Stomach (tissue), 19 donors: ENCODE measurements at regions of chr1 and their contacts with region 1.

Region 1: GRCh38 chr1:85307987-85308832 is 31.8 kb upstream of the BCL10 start:
- DNase-seq: peak; percentile 90 to 96
- H3K4me3 ChIP-seq: no peak overlapping the region
- H3K27ac ChIP-seq: peak overlapping the region in 1 of 5 donors; percentile 39
- H3K4me1 ChIP-seq: peaks cover 0 to 14% (median 12%) of the 10 kb centered on the region in 4 donors
- H3K27me3 ChIP-seq: peaks cover 0 to 7% (median 0%) of the 10 kb centered on the region in 3 donors
- CTCF ChIP-seq: peak in 5 of 7 experiments; percentile 88 to 98 (median 94)
- EP300 ChIP-seq: no peak
- POLR2A ChIP-seq: no peak

Region 2: DNA sequence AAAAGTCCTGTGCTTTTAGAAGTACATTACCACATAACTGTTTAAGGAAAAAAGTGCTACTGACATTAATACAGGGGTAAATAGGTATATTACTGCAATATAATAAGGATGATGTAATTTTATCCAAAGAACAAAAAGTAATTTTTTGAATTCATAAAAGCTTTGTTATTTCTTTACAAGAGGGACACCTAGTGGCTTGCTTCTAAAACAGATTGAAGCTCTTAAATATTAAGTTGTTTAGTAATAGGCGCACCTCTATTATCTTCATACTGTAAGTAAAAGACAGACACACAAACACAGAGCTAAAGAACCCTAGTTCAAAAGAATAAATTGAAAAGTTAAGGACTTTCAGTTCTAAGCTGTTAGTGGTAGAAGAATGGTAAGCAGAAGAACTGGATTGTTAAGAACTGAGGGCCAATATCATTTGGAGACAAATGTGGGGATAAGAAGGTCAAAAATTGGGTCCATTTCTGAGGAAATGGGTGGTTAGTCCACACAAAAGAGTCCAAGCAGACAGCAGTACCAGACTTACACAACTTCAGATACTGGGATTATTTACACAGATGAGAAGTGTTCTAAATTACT is 384.6 kb after region 1 on chr1:
- intact Hi-C with region 1: loop called (anchors 5 kb)
- DNase-seq: peak in 1 of 2 donors; percentile 46
- H3K4me3 ChIP-seq: no peak overlapping the region
- H3K27ac ChIP-seq: no peak overlapping the region
- H3K4me1 ChIP-seq: peaks cover 0 to 1% (median under 1%) of the 10 kb centered on the region in 4 donors
- H3K27me3 ChIP-seq: no peaks in the 10 kb centered on the region
- CTCF ChIP-seq: peak in 4 of 7 experiments; percentile 14 to 36 (median 22)
- EP300 ChIP-seq: no peak
- POLR2A ChIP-seq: no peak